Activated CD8-positive, alpha-beta T cell treated with anti-CD3 and anti-CD28 coated beads for 36 hours (primary cell): ENCODE measurements at regions of chr9 and their contacts with region 1.

Region 1: DNA sequence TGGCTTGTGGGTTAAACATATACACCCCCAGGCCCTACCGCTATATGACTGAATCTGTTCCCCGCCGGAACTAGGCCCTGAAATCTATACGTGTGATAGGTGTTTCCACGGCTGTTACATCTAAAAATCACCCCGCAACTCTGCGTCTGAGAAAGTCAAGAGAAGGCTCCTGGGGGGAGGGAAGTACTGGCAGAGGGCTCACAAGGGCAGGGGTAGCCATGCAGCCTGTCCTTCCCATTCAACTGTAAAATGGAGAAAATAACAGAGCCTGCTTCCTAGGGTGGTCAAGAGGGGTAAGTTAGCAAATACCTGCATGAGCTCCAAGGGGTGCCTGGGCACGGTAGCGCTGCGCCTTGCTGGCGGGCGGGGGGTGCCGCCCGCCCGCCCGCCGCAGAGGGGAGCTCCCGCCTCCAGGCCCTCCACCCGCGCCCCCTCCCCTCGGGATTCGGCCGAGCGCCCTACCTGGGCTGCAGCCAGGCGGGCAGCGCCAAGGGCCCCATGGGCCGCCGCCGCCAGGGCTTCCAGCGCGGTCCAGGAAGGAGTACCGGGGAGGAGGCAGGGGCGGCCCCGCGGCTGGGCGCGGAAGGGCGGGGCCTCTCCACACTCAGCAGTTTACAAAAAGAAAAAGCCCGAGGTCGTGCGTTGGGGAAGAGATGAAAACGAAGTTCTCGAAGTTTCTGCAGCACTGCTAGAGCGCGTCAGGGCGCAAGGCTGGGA is at the start of gene HACD4:
- DNase-seq: peak; percentile 74
- ATAC-seq: peak; percentile 80
- H3K4me3 Mint-ChIP-seq: peak within 1 kb of the TSS; percentile 70
- H3K27ac Mint-ChIP-seq: peak within 1 kb of the TSS; percentile 87
- H3K4me1 Mint-ChIP-seq: peaks cover 26% of the 10 kb centered on the region
- H3K27me3 Mint-ChIP-seq: no peaks in the 10 kb centered on the region
- CTCF ChIP-seq: no peak
- total RNA-seq, gene HACD4: 4.0 to 4.1 TPM

Region 2: GRCh38 chr9:20989923-20990341 is 41.3 kb before region 1 on chr9:
- CTCF ChIA-PET with region 1: no interaction called
- POLR2A ChIA-PET with region 1: no interaction called
- intact Hi-C with region 1: no loop called
- DNase-seq: no peak
- ATAC-seq: no peak
- H3K4me3 Mint-ChIP-seq: no peak overlapping the region
- H3K27ac Mint-ChIP-seq: no peak overlapping the region
- H3K4me1 Mint-ChIP-seq: no peaks in the 10 kb centered on the region
- H3K27me3 Mint-ChIP-seq: no peaks in the 10 kb centered on the region
- CTCF ChIP-seq: no peak

Region 3: GRCh38 chr9:21001581-21001980 is 29.7 kb before region 1 on chr9:
- CTCF ChIA-PET with region 1: interaction called, 3 read pairs
- POLR2A ChIA-PET with region 1: interaction called, 4 read pairs
- intact Hi-C with region 1: loop called (anchors 2 kb)
- DNase-seq: peak; percentile 9
- ATAC-seq: peak; percentile 67
- H3K4me3 Mint-ChIP-seq: no peak overlapping the region
- H3K27ac Mint-ChIP-seq: peak overlapping the region; percentile 79
- H3K4me1 Mint-ChIP-seq: peaks cover 34% of the 10 kb centered on the region
- H3K27me3 Mint-ChIP-seq: no peaks in the 10 kb centered on the region
- CTCF ChIP-seq: no peak